ENCODE measurements at regions of chr4 and their contacts with region 1.

Region 1: GRCh38 chr4:1556541-1557220 is 127.4 kb downstream of the FAM53A start:
- DNase-seq: no peak
- ATAC-seq: no peak
- H3K4me3 Mint-ChIP-seq: no peak overlapping the region
- H3K27ac Mint-ChIP-seq: no peak overlapping the region
- H3K4me1 Mint-ChIP-seq: no peaks in the 10 kb centered on the region
- H3K27me3 Mint-ChIP-seq: peaks cover 6% of the 10 kb centered on the region

Region 2: GRCh38 chr4:1504595-1505500 is 51.8 kb before region 1 on chr4:
- CTCF ChIA-PET with region 1: no interaction called
- POLR2A ChIA-PET with region 1: no interaction called
- intact Hi-C with region 1: loop called in 1 of 2 experiments (anchors 5 kb)
- DNase-seq: no peak
- ATAC-seq: no peak
- H3K4me3 Mint-ChIP-seq: no peak overlapping the region
- H3K27ac Mint-ChIP-seq: no peak overlapping the region
- H3K4me1 Mint-ChIP-seq: no peaks in the 10 kb centered on the region
- H3K27me3 Mint-ChIP-seq: peaks cover 3% of the 10 kb centered on the region